ENCODE measurements at regions of chr4 and their contacts with region 1.

Region 1: GRCh38 chr4:15778289-15779241 is at the start of gene CD38:
- DNase-seq: peak; percentile 71
- H3K4me3 Mint-ChIP-seq: peak within 1 kb of the TSS; percentile 87
- H3K27ac Mint-ChIP-seq: peak within 1 kb of the TSS; percentile 88
- H3K4me1 Mint-ChIP-seq: peaks cover 63% of the 10 kb centered on the region
- H3K27me3 Mint-ChIP-seq: peaks cover 6% of the 10 kb centered on the region
- total RNA-seq, gene CD38: 18.5 to 20.0 TPM

Region 2: DNA sequence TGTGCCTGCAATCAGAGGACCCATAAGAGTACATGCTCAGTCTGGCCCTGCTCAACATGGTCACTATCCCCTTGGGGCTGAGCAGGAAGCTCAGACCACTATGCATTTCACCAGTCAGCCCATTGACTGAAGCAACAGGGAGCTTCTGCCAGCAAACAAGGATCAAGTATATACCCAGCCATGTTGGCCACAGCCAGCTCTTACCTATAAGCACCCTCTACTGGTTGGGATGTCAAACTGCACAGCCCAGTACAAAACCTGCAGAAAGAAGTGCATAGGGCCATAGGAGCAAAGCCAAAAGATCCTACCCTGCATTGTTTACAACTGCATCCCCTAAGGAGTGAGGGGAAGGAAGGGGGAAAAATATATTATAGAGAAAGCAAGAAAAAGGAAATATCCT is 990.7 kb before region 1 on chr4:
- CTCF ChIA-PET with region 1: no interaction called
- intact Hi-C with region 1: loop called (anchors 10 kb)
- DNase-seq: peak; percentile 41
- H3K4me3 Mint-ChIP-seq: no peak overlapping the region
- H3K27ac Mint-ChIP-seq: no peak overlapping the region
- H3K4me1 Mint-ChIP-seq: peaks cover 21% of the 10 kb centered on the region
- H3K27me3 Mint-ChIP-seq: peaks cover 33% of the 10 kb centered on the region

Region 3: DNA sequence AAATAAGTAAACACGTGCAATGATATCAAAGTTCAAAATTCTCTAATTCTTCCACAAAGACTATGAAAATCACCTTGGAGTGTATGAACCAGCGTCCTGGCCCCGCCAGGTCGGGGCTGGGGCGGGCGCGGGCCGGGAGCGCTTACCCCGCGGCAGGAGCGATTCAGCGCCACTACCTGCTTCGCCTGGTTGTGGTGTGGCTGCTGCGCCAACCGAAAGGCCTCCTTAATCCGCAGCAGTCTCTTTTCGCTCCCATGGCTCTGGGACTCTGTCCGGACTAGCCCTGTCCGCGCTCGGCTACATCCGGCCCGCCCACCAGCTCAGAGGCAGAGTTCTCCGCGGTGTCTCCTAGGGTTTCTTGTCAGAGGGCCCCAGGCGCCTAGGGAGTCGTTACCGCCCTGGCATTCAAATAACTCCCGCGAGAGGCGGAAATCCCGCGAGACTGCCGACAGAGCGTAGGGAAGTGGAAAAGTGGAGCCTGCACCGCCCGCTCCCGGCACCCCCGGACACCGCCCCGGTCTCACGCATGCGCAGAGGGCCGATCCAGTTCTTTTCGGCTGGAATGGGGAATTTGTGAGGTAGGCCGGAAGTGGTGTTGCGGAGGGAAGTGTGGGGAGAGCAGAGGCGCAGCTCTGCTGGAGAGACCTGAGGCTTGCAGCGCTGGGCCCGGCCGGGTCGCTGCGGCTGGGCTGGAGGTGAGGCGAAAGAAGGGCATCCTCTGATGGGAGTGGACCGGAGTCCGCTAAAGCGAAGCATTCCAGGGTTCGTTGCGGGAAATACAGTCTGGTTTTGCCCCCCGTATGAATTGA is 97.2 kb before region 1 on chr4 and contains the start of gene FAM200B:
- CTCF ChIA-PET with region 1: interaction called, 4 read pairs
- intact Hi-C with region 1: loop called (anchors 1 kb)
- DNase-seq: peak; percentile 99
- H3K4me3 Mint-ChIP-seq: peak within 1 kb of the TSS; percentile 90
- H3K27ac Mint-ChIP-seq: peak within 1 kb of the TSS; percentile 89
- H3K4me1 Mint-ChIP-seq: peaks cover 39% of the 10 kb centered on the region
- H3K27me3 Mint-ChIP-seq: peaks cover 3% of the 10 kb centered on the region
- total RNA-seq, gene FAM200B: 8.0 to 9.1 TPM

Region 4: DNA sequence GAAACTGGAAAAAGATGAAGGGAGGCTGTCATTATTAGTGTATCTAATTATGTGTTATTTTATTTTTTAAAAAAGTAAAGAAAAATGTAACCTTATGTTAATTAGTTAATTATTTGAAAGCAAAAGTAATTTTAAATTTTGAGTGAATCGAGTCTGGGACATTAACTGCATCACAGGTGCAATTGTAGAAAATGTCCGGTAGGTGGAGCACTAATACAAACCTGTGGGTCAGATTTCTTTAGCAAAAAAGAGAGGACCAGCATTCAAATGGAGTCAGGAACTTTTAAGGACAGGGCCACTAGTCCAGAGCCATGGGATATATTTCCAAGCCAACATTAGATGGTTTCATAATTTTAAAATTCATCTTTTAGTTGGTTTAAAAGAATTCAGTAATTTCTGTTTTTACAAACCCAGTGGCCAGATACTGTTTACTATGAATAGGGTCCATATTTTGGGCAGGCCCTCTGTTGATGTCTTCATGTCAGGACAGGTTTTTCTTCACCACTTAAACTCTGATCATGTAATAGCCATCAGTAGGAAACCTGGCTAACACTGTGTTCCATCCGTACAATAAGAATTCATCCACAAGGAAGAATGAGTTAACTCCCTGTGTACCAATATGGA is 48.5 kb before region 1 on chr4:
- CTCF ChIA-PET with region 1: interaction called, 5 read pairs
- intact Hi-C with region 1: loop called (anchors 1 kb)
- DNase-seq: peak; percentile 54
- H3K4me3 Mint-ChIP-seq: no peak overlapping the region
- H3K27ac Mint-ChIP-seq: no peak overlapping the region
- H3K4me1 Mint-ChIP-seq: peaks cover 13% of the 10 kb centered on the region
- H3K27me3 Mint-ChIP-seq: no peaks in the 10 kb centered on the region

Region 5: GRCh38 chr4:15756361-15756861 is 22.2 kb before region 1 on chr4:
- CTCF ChIA-PET with region 1: interaction called, 30 read pairs
- intact Hi-C with region 1: loop called (anchors 1 kb)
- DNase-seq: peak; percentile 89
- H3K4me3 Mint-ChIP-seq: peak overlapping the region; percentile 54
- H3K27ac Mint-ChIP-seq: peak overlapping the region; percentile 83
- H3K4me1 Mint-ChIP-seq: peaks cover 44% of the 10 kb centered on the region
- H3K27me3 Mint-ChIP-seq: no peaks in the 10 kb centered on the region

Region 6: DNA sequence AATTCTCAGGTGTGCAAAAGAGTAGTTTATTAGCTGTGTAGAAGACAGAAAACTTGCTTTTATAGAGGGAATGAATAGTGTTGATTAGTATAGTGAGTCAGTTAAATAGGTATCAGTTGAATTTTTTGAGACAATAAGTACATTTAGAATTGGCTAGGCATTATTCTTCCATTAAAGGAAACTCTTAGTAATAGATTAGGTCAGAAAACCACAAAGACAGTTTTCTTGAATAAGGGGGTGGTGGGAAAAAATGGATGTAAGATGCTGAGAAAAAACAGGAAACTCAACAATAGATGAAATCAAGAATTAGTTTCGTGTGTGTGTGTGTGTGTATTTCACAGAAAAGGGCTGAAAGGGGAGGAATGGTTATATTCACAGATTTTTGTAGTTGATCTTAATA is 16.3 kb after region 1 on chr4:
- CTCF ChIA-PET with region 1: interaction called, 4 read pairs
- intact Hi-C with region 1: loop called (anchors 1 kb)
- DNase-seq: no peak
- H3K4me3 Mint-ChIP-seq: peak overlapping the region; percentile 39
- H3K27ac Mint-ChIP-seq: peak overlapping the region; percentile 47
- H3K4me1 Mint-ChIP-seq: peaks cover 53% of the 10 kb centered on the region
- H3K27me3 Mint-ChIP-seq: no peaks in the 10 kb centered on the region

Region 7: DNA sequence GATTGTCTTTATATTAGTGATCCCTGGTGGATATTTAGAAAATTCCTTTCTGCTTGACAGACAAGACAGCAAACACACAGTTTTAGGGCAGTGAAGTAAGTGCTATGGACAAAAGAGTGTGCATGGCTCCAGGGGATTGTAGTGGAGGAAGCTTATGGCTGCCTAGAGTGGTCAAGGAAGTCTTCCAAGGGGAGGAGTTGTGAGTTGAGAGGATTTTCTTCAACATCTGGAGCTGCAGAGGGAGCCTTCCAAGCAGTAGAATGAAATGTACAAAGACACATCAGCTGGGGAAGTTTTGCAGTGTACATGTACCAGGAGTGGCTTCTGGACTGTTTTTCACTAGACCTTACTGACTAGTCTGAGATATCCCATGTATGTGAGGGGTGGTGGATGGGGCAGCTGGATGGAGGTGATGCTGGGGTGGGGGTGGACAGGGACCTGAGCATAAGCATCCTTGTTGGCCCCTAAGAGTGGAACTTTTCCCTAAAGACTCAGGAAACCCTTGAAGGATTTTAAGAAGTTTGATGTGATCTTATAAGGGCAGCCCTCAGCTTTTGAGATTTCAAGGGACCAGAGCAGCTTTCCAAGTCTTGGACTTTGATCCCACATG is 608.3 kb after region 1 on chr4:
- CTCF ChIA-PET with region 1: no interaction called
- intact Hi-C with region 1: no loop called
- DNase-seq: no peak
- H3K4me3 Mint-ChIP-seq: no peak overlapping the region
- H3K27ac Mint-ChIP-seq: no peak overlapping the region
- H3K4me1 Mint-ChIP-seq: no peaks in the 10 kb centered on the region
- H3K27me3 Mint-ChIP-seq: peaks cover 5% of the 10 kb centered on the region

Measured in activated naive CD4-positive, alpha-beta T cell treated with anti-CD3 and anti-CD28 coated beads for 36 hours (primary cell).